ENCODE measurements at regions of chr2 and their contacts with region 1.

Region 1: DNA sequence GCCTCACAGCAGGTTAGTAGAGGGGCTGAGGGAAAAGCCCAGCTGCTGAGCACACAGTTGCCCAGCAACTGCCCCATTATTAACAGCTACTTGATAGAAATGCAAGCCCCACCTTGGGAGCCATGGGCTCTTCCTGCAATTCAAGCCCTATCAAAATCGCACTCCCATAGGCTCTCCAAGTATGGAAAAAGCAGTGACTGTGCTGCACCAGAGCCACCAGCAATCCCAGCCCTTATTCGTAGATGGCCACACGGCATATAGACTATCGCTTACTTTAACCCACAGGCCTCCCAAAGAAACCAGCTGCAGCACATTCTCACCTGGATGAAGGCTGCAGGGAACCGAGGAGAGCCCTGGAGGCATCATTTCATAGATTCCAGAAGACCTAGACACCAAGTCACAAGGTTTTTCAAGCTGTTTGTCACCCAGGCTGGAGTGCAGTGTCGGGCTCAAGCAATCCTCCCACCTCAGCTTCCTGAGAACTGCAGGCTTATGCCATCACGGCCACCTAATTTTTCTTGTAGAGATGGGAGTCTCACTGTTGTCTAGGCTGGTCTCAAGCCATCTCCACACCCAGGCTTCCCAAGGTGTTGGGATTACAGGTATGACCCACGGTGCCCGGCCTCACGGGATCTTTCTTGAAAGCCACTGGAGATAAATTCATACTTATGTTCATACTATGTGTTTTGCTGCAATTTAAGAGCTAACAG is 11.3 kb downstream of the NCL start:
- DNase-seq: no peak
- H3K4me3 Mint-ChIP-seq: no peak overlapping the region
- H3K27ac Mint-ChIP-seq: peak overlapping the region; percentile 25
- H3K4me1 Mint-ChIP-seq: peaks cover 11% of the 10 kb centered on the region
- H3K27me3 Mint-ChIP-seq: no peaks in the 10 kb centered on the region

Region 2: DNA sequence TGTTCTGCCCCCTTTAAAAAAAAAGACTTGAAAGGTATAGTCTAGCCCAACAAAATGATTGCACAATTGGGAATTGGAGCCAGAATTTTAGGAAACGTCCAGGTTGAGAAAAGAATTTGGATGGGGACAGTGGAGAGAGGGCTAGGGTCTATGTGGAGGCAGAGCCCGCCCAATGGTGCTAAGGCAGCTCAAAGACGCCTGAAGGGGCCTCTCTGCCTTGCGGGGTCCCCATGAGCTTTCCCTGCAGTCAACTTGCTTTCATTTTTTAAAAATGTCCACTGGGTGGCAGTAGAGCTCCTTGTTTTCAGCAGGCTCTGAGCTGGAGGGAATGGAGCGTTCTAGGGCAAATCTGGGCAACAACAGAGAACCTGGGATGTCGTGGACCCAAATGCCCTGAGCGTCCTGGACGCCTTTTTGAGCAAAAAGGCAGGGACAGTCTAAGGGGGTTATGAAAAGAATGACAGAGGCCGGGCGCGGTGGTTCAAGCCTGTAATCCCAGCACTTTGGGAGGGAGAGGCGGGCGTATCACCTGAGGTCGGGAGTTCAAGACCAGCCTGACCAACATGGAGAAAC is 628.5 kb before region 1 on chr2:
- CTCF ChIA-PET with region 1: no interaction called
- intact Hi-C with region 1: loop called (anchors 5 kb)
- DNase-seq: peak; percentile 59
- H3K4me3 Mint-ChIP-seq: no peak overlapping the region
- H3K27ac Mint-ChIP-seq: no peak overlapping the region
- H3K4me1 Mint-ChIP-seq: peaks cover 5% of the 10 kb centered on the region
- H3K27me3 Mint-ChIP-seq: peaks cover 27% of the 10 kb centered on the region

Region 3: GRCh38 chr2:231017231-231017598 is 435.7 kb before region 1 on chr2:
- CTCF ChIA-PET with region 1: no interaction called
- intact Hi-C with region 1: no loop called
- DNase-seq: peak; percentile 7
- H3K4me3 Mint-ChIP-seq: no peak overlapping the region
- H3K27ac Mint-ChIP-seq: no peak overlapping the region
- H3K4me1 Mint-ChIP-seq: no peaks in the 10 kb centered on the region
- H3K27me3 Mint-ChIP-seq: peaks cover 9% of the 10 kb centered on the region

Region 4: GRCh38 chr2:231227309-231228162 is 225.4 kb before region 1 on chr2:
- CTCF ChIA-PET with region 1: interaction called, 14 read pairs
- intact Hi-C with region 1: loop called (anchors 1 kb)
- DNase-seq: peak; percentile 73
- H3K4me3 Mint-ChIP-seq: no peak overlapping the region
- H3K27ac Mint-ChIP-seq: no peak overlapping the region
- H3K4me1 Mint-ChIP-seq: no peaks in the 10 kb centered on the region
- H3K27me3 Mint-ChIP-seq: no peaks in the 10 kb centered on the region

Region 5: DNA sequence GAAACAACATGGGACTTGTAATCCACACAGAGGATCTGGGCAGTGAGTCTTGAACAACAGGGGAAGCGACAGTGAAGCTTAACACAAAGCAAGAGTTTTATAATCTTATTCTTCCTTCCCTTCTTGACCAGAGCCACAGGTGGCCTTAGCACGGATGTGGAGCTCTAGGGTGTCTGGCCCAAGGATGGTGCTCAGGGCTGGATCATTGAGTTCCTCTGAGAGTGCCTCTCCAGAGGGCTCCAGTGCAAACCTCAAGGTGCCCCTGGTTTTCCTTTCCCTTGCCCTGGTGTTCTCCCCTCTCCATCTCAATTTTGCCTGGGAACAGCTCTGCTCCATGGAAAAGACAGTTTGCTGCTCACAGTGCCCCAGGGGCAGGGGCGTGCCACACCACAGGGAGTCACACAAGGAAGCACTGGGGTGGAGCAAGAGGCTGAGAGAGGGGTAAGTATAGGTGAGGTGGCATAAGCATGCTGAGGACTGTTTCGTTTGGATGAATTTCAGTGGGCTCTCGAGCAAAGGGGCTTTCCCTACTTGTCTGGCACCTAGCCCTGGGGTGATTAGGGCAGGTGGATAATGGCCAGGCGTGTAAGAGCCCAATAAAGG is 146.1 kb before region 1 on chr2:
- CTCF ChIA-PET with region 1: no interaction called
- intact Hi-C with region 1: no loop called
- DNase-seq: no peak
- H3K4me3 Mint-ChIP-seq: no peak overlapping the region
- H3K27ac Mint-ChIP-seq: no peak overlapping the region
- H3K4me1 Mint-ChIP-seq: no peaks in the 10 kb centered on the region
- H3K27me3 Mint-ChIP-seq: no peaks in the 10 kb centered on the region

Region 6: DNA sequence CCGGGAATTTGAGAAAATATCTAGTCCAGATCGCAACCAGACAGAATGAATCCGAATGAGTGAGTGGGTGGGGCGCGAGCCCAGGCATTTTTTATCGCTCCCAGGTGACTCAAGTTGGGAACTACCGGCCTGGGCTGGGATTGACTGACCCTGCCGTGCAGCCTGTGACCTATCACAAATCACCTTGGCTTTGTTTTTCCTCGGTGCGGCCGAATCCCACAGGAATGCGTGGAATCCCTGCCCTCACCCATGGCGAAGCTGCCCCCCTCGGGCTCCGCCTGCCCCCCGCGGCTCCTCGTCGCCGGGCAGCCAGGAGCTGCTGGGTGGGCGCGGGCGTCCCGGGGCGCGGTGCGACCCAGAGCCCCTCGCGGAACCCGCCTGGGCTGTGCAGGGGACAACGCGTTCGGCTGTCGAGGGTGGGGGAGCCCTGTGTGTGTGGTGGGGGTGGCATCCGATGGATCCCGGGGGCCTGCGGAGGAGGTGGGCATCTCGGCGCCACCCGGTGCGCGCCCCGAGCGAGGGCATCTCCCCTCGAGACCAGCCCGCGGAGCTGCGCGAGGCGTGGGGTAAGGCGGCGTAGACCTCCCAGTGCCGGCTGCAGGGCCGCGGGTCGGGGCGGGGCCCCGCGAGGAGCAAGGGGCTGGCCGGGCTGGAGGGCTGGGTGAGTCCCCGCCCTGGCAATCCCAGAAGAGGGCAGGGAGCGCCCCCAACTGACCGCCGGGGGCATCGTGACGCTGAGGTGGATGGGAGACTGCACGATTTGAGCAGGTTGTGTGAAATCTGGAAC is 40.9 kb before region 1 on chr2:
- CTCF ChIA-PET with region 1: interaction called, 3 read pairs
- intact Hi-C with region 1: loop called (anchors 1 kb)
- DNase-seq: peak; percentile 81
- H3K4me3 Mint-ChIP-seq: peak overlapping the region; percentile 45
- H3K27ac Mint-ChIP-seq: no peak overlapping the region
- H3K4me1 Mint-ChIP-seq: peaks cover 7% of the 10 kb centered on the region
- H3K27me3 Mint-ChIP-seq: peaks cover 33% of the 10 kb centered on the region

Region 7: GRCh38 chr2:231463698-231464575 is 11.0 kb after region 1 on chr2 and contains the start of gene NCL:
- CTCF ChIA-PET with region 1: interaction called, 16 read pairs
- intact Hi-C with region 1: no loop called
- DNase-seq: peak; percentile 87
- H3K4me3 Mint-ChIP-seq: peak within 1 kb of the TSS; percentile 97
- H3K27ac Mint-ChIP-seq: peak within 1 kb of the TSS; percentile 98
- H3K4me1 Mint-ChIP-seq: peaks cover 46% of the 10 kb centered on the region
- H3K27me3 Mint-ChIP-seq: no peaks in the 10 kb centered on the region
- total RNA-seq, gene NCL: 908 to 911 TPM

Measured in activated naive CD4-positive, alpha-beta T cell treated with anti-CD3 and anti-CD28 coated beads for 36 hours (primary cell).